AG04450 (cell line): ENCODE measurements at regions of chr2 and their contacts with region 1.

Region 1: DNA sequence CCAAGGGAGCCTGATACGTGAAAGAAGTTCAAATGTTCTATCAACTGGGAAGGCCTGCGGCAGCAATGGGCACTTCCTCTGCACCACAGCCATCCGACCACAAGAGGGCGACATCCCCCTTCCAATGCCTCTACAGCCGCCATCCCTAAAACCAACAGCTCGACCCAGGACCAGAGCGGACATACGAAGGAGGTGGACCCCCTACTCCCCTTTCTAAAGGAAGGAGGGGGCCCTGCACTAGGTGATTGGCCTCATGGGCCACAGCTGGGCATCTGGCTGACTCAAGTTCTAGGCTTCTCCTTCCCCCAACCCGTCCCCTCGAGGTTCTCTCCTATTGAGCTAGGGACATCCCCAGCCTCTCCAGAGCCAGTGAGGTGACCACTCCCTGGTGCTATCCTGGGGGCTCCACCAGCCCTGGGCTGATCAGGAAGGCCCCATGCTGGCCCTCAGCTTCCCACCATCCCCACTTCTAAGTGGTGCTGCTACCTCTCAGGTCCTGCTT is 217.2 kb downstream of the TNS1 start:
- DNase-seq: peak; percentile 29
- H3K4me3 ChIP-seq: no peak overlapping the region
- H3K27ac ChIP-seq: no peak overlapping the region
- H3K27me3 ChIP-seq: no peaks in the 10 kb centered on the region
- CTCF ChIP-seq: peak; percentile 96

Region 2: GRCh38 chr2:217858519-217859491 is 73.2 kb after region 1 on chr2:
- CTCF ChIA-PET with region 1: interaction called, 11 read pairs
- POLR2A ChIA-PET with region 1: no interaction called
- DNase-seq: peak; percentile 76
- H3K4me3 ChIP-seq: no peak overlapping the region
- H3K27ac ChIP-seq: peak overlapping the region; percentile 74
- H3K27me3 ChIP-seq: no peaks in the 10 kb centered on the region
- CTCF ChIP-seq: no peak

Region 3: GRCh38 chr2:217899231-217900009 is 113.8 kb after region 1 on chr2:
- CTCF ChIA-PET with region 1: interaction called, 11 read pairs
- POLR2A ChIA-PET with region 1: no interaction called
- DNase-seq: peak; percentile 59
- H3K4me3 ChIP-seq: 0 out of 2 replicates have a peak overlapping the region, but pooled peaks have one; percentile 12
- H3K27ac ChIP-seq: peak overlapping the region; percentile 61
- H3K27me3 ChIP-seq: no peaks in the 10 kb centered on the region
- CTCF ChIP-seq: peak; percentile 81

Region 4: DNA sequence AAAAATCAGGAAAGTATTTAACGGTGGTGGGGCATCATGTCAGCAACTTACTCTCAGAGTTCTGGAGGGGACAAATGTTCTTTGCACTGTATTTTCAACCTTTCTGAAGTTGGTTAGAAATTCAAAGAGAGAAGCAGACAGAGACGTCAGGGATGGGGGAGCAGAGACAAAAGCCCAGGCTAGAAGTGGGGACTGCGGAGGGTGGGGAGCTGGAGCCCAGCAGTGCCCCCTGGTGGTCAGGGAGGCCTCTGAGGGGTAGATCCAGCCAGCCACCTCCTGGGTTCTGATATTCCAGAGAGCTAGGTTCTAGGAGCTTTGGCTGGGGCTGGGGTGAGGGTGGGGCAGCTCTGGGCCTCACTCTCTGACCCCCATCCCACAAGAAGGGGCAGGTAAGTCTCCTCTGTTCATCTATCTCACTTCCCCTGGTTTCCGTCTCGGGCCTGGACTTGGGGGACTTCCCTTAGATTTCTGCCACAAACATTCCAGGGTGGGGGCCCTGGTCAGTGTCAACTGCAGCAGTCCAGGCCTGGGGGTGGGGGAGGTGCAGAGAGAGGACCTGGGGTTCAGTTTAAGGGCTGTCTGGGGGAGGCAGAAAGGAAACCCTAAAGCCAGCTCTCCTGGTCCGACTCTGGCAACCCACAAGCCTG is 208.3 kb after region 1 on chr2:
- CTCF ChIA-PET with region 1: interaction called, 21 read pairs
- POLR2A ChIA-PET with region 1: interaction called, 3 read pairs
- DNase-seq: no peak
- H3K4me3 ChIP-seq: no peak overlapping the region
- H3K27ac ChIP-seq: peak overlapping the region; percentile 88
- H3K27me3 ChIP-seq: no peaks in the 10 kb centered on the region
- CTCF ChIP-seq: peak; percentile 77

Region 5: GRCh38 chr2:218066926-218067515 is 281.4 kb after region 1 on chr2:
- CTCF ChIA-PET with region 1: interaction called, 54 read pairs
- POLR2A ChIA-PET with region 1: no interaction called
- DNase-seq: no peak
- H3K4me3 ChIP-seq: no peak overlapping the region
- H3K27ac ChIP-seq: no peak overlapping the region
- H3K27me3 ChIP-seq: peaks cover 60% of the 10 kb centered on the region
- CTCF ChIP-seq: no peak